WTC11 (cell line): ENCODE measurements at regions of chr7 and their contacts with region 1.

Region 1: DNA sequence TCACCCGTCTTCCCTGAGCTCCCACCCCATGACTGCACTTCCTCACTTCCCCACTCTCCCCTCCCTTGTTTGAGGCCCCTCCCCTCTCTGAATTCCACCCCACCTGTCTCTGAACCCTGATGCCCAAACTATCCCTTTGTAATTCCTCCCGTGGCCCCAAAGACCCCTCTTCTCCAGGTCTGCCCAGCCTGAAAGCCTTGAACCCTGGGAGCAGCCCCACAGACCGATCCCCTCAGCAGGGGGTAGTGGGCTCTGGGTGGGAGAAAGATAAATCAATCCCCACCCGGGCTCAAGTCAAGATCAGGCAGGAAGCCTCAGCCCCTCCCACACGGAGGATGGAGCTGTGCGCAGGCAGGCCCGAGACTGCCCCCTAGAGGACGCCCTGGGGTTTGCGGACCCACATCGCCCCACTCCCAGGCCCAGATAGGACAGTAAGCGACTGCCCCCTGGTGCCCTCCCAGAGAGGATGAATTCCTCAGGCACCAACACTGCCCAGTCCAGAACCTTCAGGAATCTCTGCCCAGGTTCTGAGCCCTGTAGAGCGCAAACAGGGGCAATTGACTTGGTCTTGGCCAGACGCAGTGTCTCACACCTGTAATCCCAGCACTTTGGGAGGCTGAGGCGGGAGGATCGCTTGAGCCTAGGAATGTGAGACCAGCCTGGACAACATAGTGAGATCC is 11.7 kb downstream of the HSPB1 start:
- DNase-seq: peak; percentile 99
- ATAC-seq: peak; percentile 60
- H3K4me3 Mint-ChIP-seq: peak overlapping the region; percentile 69
- H3K27ac Mint-ChIP-seq: no peak overlapping the region
- H3K4me1 Mint-ChIP-seq: peaks cover 23% of the 10 kb centered on the region
- H3K27me3 Mint-ChIP-seq: no peaks in the 10 kb centered on the region
- CTCF ChIP-seq: peak; percentile 98

Region 2: DNA sequence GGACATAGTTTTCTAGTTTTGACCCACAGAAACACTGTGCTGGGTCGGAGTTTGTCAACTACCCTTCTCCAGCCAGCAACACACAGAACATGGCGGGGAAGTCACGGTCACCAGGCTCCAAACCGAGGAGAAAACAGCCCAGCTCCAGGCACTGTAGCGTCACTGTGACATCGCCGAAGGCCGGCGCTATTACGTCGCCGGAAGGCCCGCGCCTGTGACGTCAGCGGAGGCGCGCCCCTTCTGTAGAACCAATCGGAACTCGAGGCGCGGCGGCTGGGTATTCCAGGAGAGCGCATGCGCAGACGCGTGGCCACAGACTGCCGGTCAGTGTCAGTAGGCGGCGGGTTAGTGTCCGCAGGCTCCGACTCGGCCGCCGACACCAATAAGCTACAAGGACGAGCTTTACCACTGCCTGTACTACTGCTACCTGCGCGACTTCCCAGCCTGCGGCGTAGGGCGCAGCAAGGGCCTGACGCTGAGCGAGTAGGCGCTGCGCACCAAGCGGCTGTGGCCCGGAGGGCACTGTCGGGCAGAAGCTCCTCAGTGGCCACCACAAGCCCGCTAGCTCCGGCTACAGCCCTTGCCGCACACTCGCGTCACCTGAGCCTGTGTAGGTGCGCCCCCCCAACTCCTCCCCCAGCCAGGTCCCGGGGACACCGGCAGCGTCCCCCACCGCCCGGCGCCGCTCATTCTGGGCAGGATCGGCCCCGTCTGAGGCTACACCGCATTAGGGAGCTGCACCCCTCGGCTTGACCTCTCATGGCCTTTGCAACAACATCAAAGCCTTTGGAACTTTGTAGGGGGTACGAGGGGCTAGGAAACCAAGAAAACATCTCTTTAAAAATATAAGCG is 147.6 kb before region 1 on chr7:
- CTCF ChIA-PET with region 1: interaction called, 12 read pairs
- POLR2A ChIA-PET with region 1: interaction called, 16 read pairs
- DNase-seq: peak; percentile 98
- ATAC-seq: peak; percentile 70
- H3K4me3 Mint-ChIP-seq: peak overlapping the region; percentile 70
- H3K27ac Mint-ChIP-seq: peak overlapping the region; percentile 99
- H3K4me1 Mint-ChIP-seq: peaks cover 35% of the 10 kb centered on the region
- H3K27me3 Mint-ChIP-seq: no peaks in the 10 kb centered on the region
- CTCF ChIP-seq: no peak

Region 3: DNA sequence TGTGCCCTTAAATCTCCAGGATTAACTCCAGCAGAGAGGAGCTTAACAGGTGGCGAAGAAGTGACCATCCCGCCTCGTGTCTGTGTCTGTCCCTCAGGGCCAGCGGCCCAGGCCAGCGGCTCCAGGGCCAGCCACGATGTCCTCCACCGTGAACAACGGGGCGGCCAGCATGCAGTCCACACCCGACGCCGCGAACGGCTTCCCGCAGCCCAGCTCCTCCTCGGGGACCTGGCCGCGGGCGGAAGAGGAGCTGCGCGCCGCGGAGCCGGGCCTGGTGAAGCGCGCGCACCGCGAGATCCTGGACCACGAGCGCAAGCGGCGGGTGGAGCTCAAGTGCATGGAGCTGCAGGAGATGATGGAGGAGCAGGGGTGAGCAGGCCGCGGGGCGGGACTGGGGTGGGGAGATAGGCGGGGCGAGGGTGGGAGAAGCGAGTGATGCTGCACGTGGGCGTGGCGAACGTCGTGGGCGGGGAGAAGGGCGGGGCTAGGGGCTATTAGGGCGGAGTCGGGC is 79.2 kb before region 1 on chr7:
- CTCF ChIA-PET with region 1: interaction called, 17 read pairs
- POLR2A ChIA-PET with region 1: interaction called, 9 read pairs
- DNase-seq: peak; percentile 98
- ATAC-seq: peak; percentile 86
- H3K4me3 Mint-ChIP-seq: peak overlapping the region; percentile 70
- H3K27ac Mint-ChIP-seq: peak overlapping the region; percentile 89; the same call in 1 of the 2 replicates
- H3K4me1 Mint-ChIP-seq: peaks cover 69% of the 10 kb centered on the region
- H3K27me3 Mint-ChIP-seq: no peaks in the 10 kb centered on the region; the same call in none of the 2 replicates
- CTCF ChIP-seq: no peak

Region 4: GRCh38 chr7:76272851-76273497 is 41.2 kb before region 1 on chr7:
- CTCF ChIA-PET with region 1: interaction called, 17 read pairs
- POLR2A ChIA-PET with region 1: interaction called, 5 read pairs
- DNase-seq: no peak
- ATAC-seq: peak; percentile 38
- H3K4me3 Mint-ChIP-seq: peak overlapping the region; percentile 39
- H3K27ac Mint-ChIP-seq: no peak overlapping the region
- H3K4me1 Mint-ChIP-seq: peaks cover 36% of the 10 kb centered on the region
- H3K27me3 Mint-ChIP-seq: peaks cover 21% of the 10 kb centered on the region; the same call in 1 of the 2 replicates
- CTCF ChIP-seq: no peak

Region 5: DNA sequence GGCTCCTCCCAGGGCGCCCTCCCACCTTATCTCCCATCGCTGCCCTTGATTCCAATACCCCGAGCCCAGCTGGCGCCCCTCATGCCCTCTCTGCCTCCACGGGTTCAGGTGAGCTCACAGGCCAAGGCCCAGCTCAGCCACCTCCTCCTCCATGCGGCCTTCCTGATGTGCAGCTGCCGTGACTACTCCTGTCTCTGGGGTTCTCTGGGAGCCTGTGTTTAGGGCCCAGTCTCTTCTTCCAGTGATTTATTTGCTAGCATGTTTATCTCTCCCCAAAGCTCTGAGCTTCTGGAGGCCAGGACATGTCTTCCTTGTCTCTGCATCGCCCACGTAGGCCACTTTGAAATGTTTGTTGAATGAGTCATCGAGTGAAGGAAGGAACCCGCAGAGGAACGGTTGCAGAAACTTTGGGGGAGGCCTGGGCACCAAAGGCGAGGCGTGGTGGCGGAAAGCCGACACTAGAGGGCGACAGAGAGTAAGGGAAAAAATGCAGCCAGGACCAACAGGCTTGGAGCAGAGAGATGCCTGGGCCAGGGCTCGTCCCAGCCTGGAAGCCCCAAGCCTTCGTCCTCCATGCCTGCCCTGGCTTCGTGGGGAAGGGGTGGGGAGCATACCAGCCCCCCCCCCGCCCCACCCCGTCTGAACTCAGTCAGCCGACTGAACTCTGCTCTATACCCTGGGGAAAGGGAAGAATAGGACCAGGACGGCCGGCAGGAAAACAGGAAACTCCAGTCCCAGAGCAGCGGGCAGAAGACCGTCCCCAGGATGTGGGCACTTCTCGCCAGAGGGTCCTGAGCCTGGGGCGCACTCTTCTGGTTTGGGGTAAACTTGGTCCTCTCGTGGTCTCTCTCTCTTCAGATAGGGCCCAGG is 22.6 kb before region 1 on chr7:
- CTCF ChIA-PET with region 1: interaction called, 90 read pairs
- POLR2A ChIA-PET with region 1: interaction called, 9 read pairs
- DNase-seq: peak; percentile 93
- ATAC-seq: peak; percentile 79
- H3K4me3 Mint-ChIP-seq: no peak overlapping the region
- H3K27ac Mint-ChIP-seq: peak overlapping the region; percentile 96
- H3K4me1 Mint-ChIP-seq: peaks cover 39% of the 10 kb centered on the region
- H3K27me3 Mint-ChIP-seq: peaks cover 3% of the 10 kb centered on the region
- CTCF ChIP-seq: peak; percentile 97

Region 6: DNA sequence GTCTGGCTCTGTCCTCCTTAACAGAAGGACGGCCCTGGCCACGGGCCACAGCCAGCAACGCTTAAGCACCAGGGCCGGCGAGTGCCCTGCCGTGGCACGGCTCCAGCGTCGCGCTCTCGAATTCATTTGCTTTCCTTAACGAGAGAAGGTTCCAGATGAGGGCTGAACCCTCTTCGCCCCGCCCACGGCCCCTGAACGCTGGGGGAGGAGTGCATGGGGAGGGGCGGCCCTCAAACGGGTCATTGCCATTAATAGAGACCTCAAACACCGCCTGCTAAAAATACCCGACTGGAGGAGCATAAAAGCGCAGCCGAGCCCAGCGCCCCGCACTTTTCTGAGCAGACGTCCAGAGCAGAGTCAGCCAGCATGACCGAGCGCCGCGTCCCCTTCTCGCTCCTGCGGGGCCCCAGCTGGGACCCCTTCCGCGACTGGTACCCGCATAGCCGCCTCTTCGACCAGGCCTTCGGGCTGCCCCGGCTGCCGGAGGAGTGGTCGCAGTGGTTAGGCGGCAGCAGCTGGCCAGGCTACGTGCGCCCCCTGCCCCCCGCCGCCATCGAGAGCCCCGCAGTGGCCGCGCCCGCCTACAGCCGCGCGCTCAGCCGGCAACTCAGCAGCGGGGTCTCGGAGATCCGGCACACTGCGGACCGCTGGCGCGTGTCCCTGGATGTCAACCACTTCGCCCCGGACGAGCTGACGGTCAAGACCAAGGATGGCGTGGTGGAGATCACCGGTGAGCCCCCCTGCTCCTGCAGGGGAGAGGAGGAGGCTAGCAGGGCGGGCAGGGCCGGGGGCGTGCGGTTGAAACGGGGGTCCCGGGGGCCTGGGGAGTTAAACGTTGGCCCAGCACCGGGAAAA is 11.6 kb before region 1 on chr7 and contains the start of gene HSPB1:
- CTCF ChIA-PET with region 1: interaction called, 36 read pairs
- POLR2A ChIA-PET with region 1: interaction called, 9 read pairs
- DNase-seq: peak; percentile 83
- ATAC-seq: peak; percentile 32
- H3K4me3 Mint-ChIP-seq: peak within 1 kb of the TSS; percentile 82
- H3K27ac Mint-ChIP-seq: peak within 1 kb of the TSS; percentile 97
- H3K4me1 Mint-ChIP-seq: peaks cover 23% of the 10 kb centered on the region
- H3K27me3 Mint-ChIP-seq: peaks cover 24% of the 10 kb centered on the region
- CTCF ChIP-seq: no peak
- total RNA-seq, gene HSPB1: 202 to 299 TPM (median 285 TPM) in 3 replicates